ENCODE measurements at regions of chr1 and their contacts with region 1.

Region 1: DNA sequence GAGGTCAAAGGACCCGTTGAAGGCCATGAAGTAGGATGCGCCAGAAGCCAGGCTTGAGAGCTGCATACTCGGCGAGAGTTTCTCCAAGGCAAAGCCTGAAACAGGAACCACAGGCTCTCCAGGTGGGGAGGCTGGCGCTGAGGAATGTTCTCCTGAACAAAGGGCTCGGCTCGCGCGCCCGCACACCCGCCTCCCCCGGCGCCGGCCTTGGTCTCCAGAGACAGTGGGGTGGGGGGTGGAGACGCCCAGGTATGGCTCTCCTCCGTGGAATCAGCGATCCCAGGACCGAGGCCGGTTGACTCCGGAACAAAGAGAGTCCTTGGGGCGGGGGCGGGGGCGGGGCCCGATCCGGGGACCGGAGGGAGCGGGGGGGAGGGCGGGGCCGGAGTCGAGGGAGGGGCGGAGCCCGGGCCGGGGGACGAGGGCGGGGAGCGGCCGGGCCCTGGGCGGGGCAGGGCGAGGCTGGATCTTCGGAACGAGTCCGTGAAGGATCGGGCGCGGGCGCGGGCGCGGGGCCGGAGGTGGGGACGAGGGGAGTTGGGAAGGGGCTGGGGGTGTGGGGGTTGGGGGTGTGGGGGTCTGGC is 85.0 kb downstream of the NKAIN1 start:
- DNase-seq: peak; percentile 80
- ATAC-seq: peak; percentile 72
- H3K4me3 ChIP-seq: peak overlapping the region; percentile 80
- H3K27ac ChIP-seq: peak overlapping the region; percentile 88
- H3K4me1 ChIP-seq: peaks cover 39% of the 10 kb centered on the region
- H3K27me3 ChIP-seq: no peaks in the 10 kb centered on the region
- CTCF ChIP-seq: no peak

Region 2: DNA sequence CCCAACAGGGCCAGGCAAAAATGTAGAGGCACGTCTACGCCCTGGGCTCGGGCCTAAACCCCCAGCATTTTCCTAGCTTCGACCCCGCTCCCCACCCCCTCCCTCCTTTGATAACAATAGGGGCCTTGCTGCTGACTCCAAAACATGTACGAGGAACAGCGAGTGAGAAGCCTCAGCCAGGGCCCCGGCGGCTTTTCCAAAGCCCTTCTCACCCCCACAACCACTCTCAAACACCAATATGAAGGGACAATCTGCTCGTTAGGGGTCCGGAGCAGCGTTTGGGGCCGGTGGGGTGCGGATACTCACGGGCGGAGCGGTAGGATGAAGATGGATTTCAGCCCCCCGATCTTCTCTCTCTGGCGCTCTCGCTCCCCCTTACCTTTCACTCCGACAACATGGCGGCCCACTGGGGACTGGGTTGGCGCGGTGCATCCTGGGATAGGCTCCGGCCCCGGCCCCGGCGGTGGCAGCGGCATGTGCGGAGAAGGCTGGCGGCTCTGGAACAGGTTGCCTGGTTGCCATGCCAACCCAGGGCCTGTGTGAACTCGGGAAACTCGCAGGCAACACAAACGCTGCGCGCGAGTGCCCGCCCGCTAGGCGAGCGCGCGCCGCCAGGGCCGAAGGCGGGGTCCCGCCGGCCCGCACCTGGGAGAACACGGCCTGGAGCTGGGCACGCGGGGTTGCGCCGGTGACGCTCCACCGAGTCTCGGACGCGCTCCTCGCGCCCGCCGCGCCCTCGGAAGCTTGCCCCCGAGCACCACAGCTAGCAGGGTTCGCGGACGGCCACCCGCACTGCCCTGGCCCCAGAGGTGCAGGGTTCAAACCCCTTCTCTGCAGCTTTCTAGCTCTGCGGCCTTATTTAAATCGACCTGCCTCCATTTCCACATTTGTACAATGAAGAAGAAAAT is 89.2 kb before region 1 on chr1 and contains the start of gene PUM1:
- CTCF ChIA-PET with region 1: no interaction called
- POLR2A ChIA-PET with region 1: no interaction called
- intact Hi-C with region 1: loop called (anchors 1 kb)
- DNase-seq: peak; percentile 98
- ATAC-seq: peak; percentile 94
- H3K4me3 ChIP-seq: peak within 1 kb of the TSS; percentile 89
- H3K27ac ChIP-seq: peak within 1 kb of the TSS; percentile 75
- H3K4me1 ChIP-seq: peaks cover 18% of the 10 kb centered on the region
- H3K27me3 ChIP-seq: no peaks in the 10 kb centered on the region
- CTCF ChIP-seq: no peak
- total RNA-seq, gene PUM1: 43.3 and 50.7 TPM in 2 replicates

Region 3: GRCh38 chr1:31227891-31228568 is 73.3 kb after region 1 on chr1:
- CTCF ChIA-PET with region 1: no interaction called
- POLR2A ChIA-PET with region 1: no interaction called
- intact Hi-C with region 1: no loop called
- DNase-seq: no peak
- ATAC-seq: no peak
- H3K4me3 ChIP-seq: no peak overlapping the region
- H3K27ac ChIP-seq: no peak overlapping the region
- H3K4me1 ChIP-seq: 0 out of 2 replicates have a peak, but pooled peaks cover 6% of the 10 kb centered on the region
- H3K27me3 ChIP-seq: peaks cover 7% of the 10 kb centered on the region; the same call in 1 of the 2 replicates
- CTCF ChIP-seq: no peak